Esophagus squamous epithelium (tissue), 5 donors: ENCODE measurements at regions of chr7 and their contacts with region 1.

Region 1: GRCh38 chr7:31735991-31736982 is 49.3 kb downstream of the PPP1R17 start:
- DNase-seq: no peak
- H3K4me3 ChIP-seq: no peak overlapping the region
- H3K27ac ChIP-seq: no peak overlapping the region
- H3K4me1 ChIP-seq: no peaks in the 10 kb centered on the region
- H3K27me3 ChIP-seq: no peaks in the 10 kb centered on the region
- CTCF ChIP-seq: peak; percentile 66 to 89 (median 82)
- POLR2A ChIP-seq: no peak

Region 2: GRCh38 chr7:31134246-31135188 is 601.8 kb before region 1 on chr7:
- intact Hi-C with region 1: loop called (anchors 10 kb)
- DNase-seq: no peak
- H3K4me3 ChIP-seq: no peak overlapping the region
- H3K27ac ChIP-seq: no peak overlapping the region
- H3K4me1 ChIP-seq: no peaks in the 10 kb centered on the region
- H3K27me3 ChIP-seq: no peaks in the 10 kb centered on the region
- CTCF ChIP-seq: peak in 5 of 6 experiments; percentile 52 to 74 (median 65)
- POLR2A ChIP-seq: no peak

Region 3: GRCh38 chr7:31408140-31408745 is 328.0 kb before region 1 on chr7:
- intact Hi-C with region 1: no loop called
- DNase-seq: no peak
- H3K4me3 ChIP-seq: no peak overlapping the region
- H3K27ac ChIP-seq: no peak overlapping the region
- H3K4me1 ChIP-seq: peaks cover 0 to 11% (median 0%) of the 10 kb centered on the region in 3 donors
- H3K27me3 ChIP-seq: peaks cover 0 to 3% (median 0%) of the 10 kb centered on the region in 4 donors
- CTCF ChIP-seq: no peak
- POLR2A ChIP-seq: no peak

Region 4: GRCh38 chr7:31443457-31443856 is 292.8 kb before region 1 on chr7:
- intact Hi-C with region 1: loop called (anchors 10 kb)
- DNase-seq: no peak
- H3K4me3 ChIP-seq: no peak overlapping the region
- H3K27ac ChIP-seq: no peak overlapping the region
- H3K4me1 ChIP-seq: no peaks in the 10 kb centered on the region
- H3K27me3 ChIP-seq: peaks cover 0 to 27% (median 0%) of the 10 kb centered on the region in 4 donors
- CTCF ChIP-seq: peak; percentile 52 to 72 (median 68)
- POLR2A ChIP-seq: no peak